ENCODE measurements at regions of chr11 and their contacts with region 1.

Region 1: GRCh38 chr11:17511571-17511970 is 32.6 kb downstream of the USH1C start:
- DNase-seq: no peak
- ATAC-seq: no peak
- H3K4me3 Mint-ChIP-seq: no peak overlapping the region
- H3K27ac Mint-ChIP-seq: no peak overlapping the region
- H3K4me1 Mint-ChIP-seq: no peaks in the 10 kb centered on the region
- H3K27me3 Mint-ChIP-seq: peaks cover 15% of the 10 kb centered on the region
- CTCF ChIP-seq: no peak

Region 2: DNA sequence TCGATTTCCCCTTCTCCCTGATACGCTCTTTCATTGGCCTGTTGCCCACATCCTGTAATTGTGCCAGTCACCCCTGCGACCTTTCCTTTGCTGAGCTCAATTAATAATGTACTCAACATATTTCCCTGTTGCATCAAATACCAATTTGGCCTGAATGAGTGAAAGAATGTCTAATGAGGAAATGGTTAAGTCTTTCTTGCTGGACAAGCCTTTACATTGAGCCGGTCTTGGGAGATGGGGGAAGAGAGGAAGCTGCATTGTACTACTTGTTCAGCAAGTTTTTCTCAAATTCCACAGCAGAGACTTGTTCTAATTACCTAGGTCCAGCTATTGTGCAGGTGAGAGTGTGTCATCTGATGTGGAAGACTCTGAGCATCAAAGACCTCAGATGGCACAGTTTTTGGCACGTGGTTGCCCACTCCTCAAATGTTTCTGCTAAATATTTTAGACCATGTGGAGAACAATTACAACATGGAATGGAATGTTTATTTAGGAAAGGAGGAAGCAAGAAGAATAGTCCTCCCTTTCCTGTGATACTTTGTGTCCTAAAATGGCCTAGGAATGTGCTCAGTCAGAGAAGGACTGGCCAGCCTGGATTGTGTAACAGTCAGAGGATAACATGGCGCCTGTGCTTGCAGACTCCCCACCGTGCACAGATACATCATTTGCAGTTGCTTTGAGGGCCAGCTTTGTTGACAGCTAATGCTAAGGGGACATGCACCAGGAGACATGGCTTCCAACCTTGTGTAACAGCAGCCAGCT is 1858.7 kb after region 1 on chr11:
- CTCF ChIA-PET with region 1: no interaction called
- POLR2A ChIA-PET with region 1: interaction called, 10 read pairs
- intact Hi-C with region 1: no loop called
- DNase-seq: no peak
- ATAC-seq: no peak
- H3K4me3 Mint-ChIP-seq: no peak overlapping the region
- H3K27ac Mint-ChIP-seq: no peak overlapping the region
- H3K4me1 Mint-ChIP-seq: no peaks in the 10 kb centered on the region
- H3K27me3 Mint-ChIP-seq: peaks cover 9% of the 10 kb centered on the region
- CTCF ChIP-seq: no peak